ENCODE measurements at regions of chr7 and their contacts with region 1.

Region 1: DNA sequence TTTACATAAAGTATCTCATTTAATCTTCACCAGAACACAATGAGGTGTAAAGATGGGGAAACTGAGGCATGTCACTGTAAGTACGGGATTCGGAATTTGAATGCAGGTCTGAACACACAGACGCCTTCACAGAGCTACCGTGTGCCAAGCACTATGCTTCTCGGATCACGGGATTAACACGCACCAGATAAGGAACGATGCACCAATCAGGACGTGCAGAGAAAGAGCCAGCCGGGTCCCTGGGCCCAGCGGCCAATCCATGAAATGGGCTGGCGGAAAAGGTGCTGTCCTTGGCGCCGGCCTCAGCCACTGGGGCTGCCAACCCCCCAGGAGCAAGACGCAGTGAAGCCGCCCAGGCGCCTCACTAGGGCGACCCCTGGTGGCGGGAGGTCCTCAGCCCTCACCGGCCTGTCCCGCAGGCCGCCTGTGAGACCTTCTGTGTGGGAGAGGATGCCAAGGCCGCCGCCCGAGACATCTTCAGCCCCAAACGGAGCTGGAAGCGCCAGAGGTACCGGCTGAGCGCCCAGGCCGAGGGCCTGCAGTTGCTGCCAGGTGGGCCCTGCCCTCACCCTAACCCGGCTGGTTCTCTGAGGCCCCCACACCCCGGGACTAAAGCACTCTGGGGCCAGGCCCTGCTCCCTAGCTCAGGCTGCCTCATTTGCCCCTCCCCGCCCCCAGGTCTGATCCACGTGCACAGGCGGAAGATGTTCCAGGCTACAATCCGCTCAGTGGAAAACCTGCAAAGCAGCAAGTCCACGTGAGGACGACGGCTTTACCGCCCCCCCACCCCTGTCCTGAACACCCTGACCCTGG is 15.6 kb downstream of the ATG9B start:
- DNase-seq: peak; percentile 87
- ATAC-seq: peak; percentile 86
- H3K4me3 ChIP-seq: peak overlapping the region; percentile 72 to 73
- H3K27ac ChIP-seq: peak overlapping the region; percentile 71
- H3K4me1 ChIP-seq: peaks cover 16 to 51% of the 10 kb centered on the region in 2 experiments; a peak in 3 of 4 replicates
- H3K27me3 ChIP-seq: no peaks in the 10 kb centered on the region
- CTCF ChIP-seq: peak in 2 of 3 experiments; percentile 85 to 94; a peak in 4 of 6 replicates
- POLR2A ChIP-seq: peak; percentile 83
- RAD21 ChIP-seq: no peak

Region 2: GRCh38 chr7:150824379-150825177 is 184.1 kb before region 1 on chr7:
- CTCF ChIA-PET with region 1: no interaction called
- POLR2A ChIA-PET with region 1: no interaction called
- RAD21 ChIA-PET with region 1: no interaction called
- intact Hi-C with region 1: no loop called
- DNase-seq: no peak
- ATAC-seq: peak; percentile 81
- H3K4me3 ChIP-seq: no peak overlapping the region
- H3K27ac ChIP-seq: no peak overlapping the region
- H3K4me1 ChIP-seq: no peaks in the 10 kb centered on the region
- H3K27me3 ChIP-seq: peaks cover under 1% of the 10 kb centered on the region; the same call in 1 of the 2 replicates
- CTCF ChIP-seq: no peak
- POLR2A ChIP-seq: no peak
- RAD21 ChIP-seq: no peak

Region 3: DNA sequence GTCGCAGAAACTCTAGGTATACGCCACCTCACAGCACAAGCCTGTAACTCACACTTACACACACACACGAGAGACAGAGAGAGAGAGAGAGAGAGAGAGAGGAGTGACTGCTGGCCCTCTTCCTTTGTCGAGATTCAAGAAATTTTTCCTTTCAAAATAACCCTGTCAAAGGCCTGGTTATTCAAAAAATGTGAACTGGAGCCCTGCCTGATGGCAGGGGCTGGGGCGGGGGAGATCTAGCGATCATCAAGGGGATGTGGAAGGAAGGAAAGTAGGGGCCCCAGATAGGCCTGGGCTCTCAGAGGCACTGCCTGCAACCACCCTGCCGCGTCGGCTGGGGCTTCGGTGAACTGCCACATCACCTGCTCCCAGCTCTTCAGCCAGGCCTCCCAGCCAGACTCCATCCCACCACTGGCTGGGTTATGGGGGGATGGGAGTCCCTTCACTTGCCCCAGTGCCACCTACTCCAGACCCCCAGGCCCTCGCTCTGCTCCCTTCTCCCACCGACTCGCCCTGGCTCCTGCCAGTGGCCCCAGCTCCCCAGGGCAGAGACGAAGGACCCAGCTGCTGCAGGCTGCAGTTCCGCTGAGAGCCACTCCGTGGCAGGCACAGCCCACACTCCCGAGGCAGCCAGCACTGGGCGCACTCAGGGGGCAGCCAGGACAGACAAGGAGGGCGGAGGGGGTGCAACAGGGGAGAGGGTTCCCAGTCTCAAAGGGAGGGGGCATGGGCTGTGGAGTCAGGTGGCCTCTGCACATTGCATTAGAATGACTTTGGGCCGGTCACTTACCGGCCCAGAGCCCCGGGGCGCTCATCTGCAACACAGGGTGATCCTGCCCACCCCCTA is 45.9 kb before region 1 on chr7:
- CTCF ChIA-PET with region 1: interaction called, 18 read pairs
- POLR2A ChIA-PET with region 1: interaction called, 3 read pairs
- RAD21 ChIA-PET with region 1: interaction called, 3 to 5 read pairs
- intact Hi-C with region 1: no loop called
- DNase-seq: no peak
- ATAC-seq: peak; percentile 84
- H3K4me3 ChIP-seq: no peak overlapping the region
- H3K27ac ChIP-seq: no peak overlapping the region
- H3K4me1 ChIP-seq: peaks cover 20 to 27% of the 10 kb centered on the region in 2 experiments
- H3K27me3 ChIP-seq: no peaks in the 10 kb centered on the region
- CTCF ChIP-seq: peak; percentile 87 to 94 (median 90)
- POLR2A ChIP-seq: no peak
- RAD21 ChIP-seq: peak; percentile 91

Region 4: GRCh38 chr7:150978136-150978789 is 30.5 kb before region 1 on chr7 and contains the start of gene KCNH2:
- CTCF ChIA-PET with region 1: interaction called, 6 read pairs
- POLR2A ChIA-PET with region 1: interaction called, 4 read pairs
- RAD21 ChIA-PET with region 1: no interaction called
- intact Hi-C with region 1: loop called (anchors 1 kb)
- DNase-seq: no peak
- ATAC-seq: peak; percentile 58
- H3K4me3 ChIP-seq: peak within 1 kb of the TSS; percentile 46 to 75
- H3K27ac ChIP-seq: peak within 1 kb of the TSS; percentile 55; the same call in 1 of the 2 replicates
- H3K4me1 ChIP-seq: peaks cover 34 to 51% of the 10 kb centered on the region in 2 experiments
- H3K27me3 ChIP-seq: peaks cover 35% of the 10 kb centered on the region; the same call in 1 of the 2 replicates
- CTCF ChIP-seq: no peak
- POLR2A ChIP-seq: no peak
- RAD21 ChIP-seq: no peak
- total RNA-seq, gene KCNH2: 9.7 TPM

Region 5: GRCh38 chr7:150992833-150993302 is 15.8 kb before region 1 on chr7:
- CTCF ChIA-PET with region 1: interaction called, 21 read pairs
- POLR2A ChIA-PET with region 1: no interaction called
- RAD21 ChIA-PET with region 1: no interaction called
- intact Hi-C with region 1: no loop called
- DNase-seq: no peak
- ATAC-seq: peak; percentile 77
- H3K4me3 ChIP-seq: no peak overlapping the region
- H3K27ac ChIP-seq: no peak overlapping the region
- H3K4me1 ChIP-seq: peaks cover 0 to 25% of the 10 kb centered on the region in 2 experiments; a peak in 2 of 4 replicates
- H3K27me3 ChIP-seq: no peaks in the 10 kb centered on the region
- CTCF ChIP-seq: no peak
- POLR2A ChIP-seq: no peak
- RAD21 ChIP-seq: no peak

Region 6: GRCh38 chr7:151028131-151028947 is 19.6 kb after region 1 on chr7 and contains the start of gene ABCB8:
- CTCF ChIA-PET with region 1: interaction called, 15 read pairs
- POLR2A ChIA-PET with region 1: interaction called, 7 read pairs
- RAD21 ChIA-PET with region 1: interaction called in 1 of 2 experiments, 3 read pairs
- intact Hi-C with region 1: no loop called
- DNase-seq: peak; percentile 99
- ATAC-seq: peak; percentile 90
- H3K4me3 ChIP-seq: peak within 1 kb of the TSS; percentile 72
- H3K27ac ChIP-seq: peak within 1 kb of the TSS; percentile 60
- H3K4me1 ChIP-seq: peaks cover 6 to 58% of the 10 kb centered on the region in 2 experiments
- H3K27me3 ChIP-seq: no peaks in the 10 kb centered on the region
- CTCF ChIP-seq: peak in 2 of 3 experiments; percentile 41 to 46; a peak in 4 of 6 replicates
- POLR2A ChIP-seq: peak; percentile 33
- RAD21 ChIP-seq: no peak
- total RNA-seq, gene ABCB8: 55.2 TPM